ENCODE measurements at regions of chr4 and their contacts with region 1.

Region 1: GRCh38 chr4:15956179-15956850 is 6.7 kb downstream of the FGFBP2 start:
- DNase-seq: peak; percentile 80 to 81
- H3K4me3 ChIP-seq: no peak overlapping the region
- H3K4me3 Mint-ChIP-seq: no peak overlapping the region
- H3K27ac Mint-ChIP-seq: no peak overlapping the region
- H3K4me1 ChIP-seq: peaks cover 8% of the 10 kb centered on the region; the same call in 1 of the 2 replicates
- H3K4me1 Mint-ChIP-seq: peaks cover 5% of the 10 kb centered on the region
- H3K27me3 ChIP-seq: no peaks in the 10 kb centered on the region
- H3K27me3 Mint-ChIP-seq: no peaks in the 10 kb centered on the region
- CTCF ChIP-seq: peak; percentile 85 to 86

Region 2: DNA sequence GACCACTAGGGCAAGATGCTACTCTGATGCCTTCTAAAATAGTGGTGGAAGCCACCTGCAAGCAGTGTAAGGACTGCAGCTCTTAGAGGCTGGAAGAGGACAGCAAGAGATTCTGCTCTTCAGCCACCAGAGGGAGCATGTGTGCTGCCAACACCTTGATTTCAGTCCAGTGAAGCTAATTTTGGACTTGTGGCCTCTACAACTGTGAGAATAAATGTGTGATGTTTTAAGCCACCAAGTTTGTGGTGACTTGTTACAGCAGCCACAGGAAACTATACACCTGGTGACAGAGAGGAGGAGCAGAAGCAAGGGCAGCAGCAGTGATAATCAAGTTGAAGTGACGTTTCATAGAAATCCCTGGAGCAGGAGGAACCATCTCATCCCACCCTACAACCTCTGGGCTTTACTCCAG is 73.6 kb before region 1 on chr4:
- CTCF ChIA-PET with region 1: interaction called, 57 read pairs
- POLR2A ChIA-PET with region 1: no interaction called
- intact Hi-C with region 1: loop called (anchors 1 kb)
- DNase-seq: peak; percentile 53 to 71
- H3K4me3 ChIP-seq: no peak overlapping the region
- H3K4me3 Mint-ChIP-seq: no peak overlapping the region
- H3K27ac Mint-ChIP-seq: no peak overlapping the region
- H3K4me1 ChIP-seq: no peaks in the 10 kb centered on the region
- H3K4me1 Mint-ChIP-seq: no peaks in the 10 kb centered on the region
- H3K27me3 ChIP-seq: no peaks in the 10 kb centered on the region
- H3K27me3 Mint-ChIP-seq: peaks cover 2% of the 10 kb centered on the region
- CTCF ChIP-seq: peak; percentile 85 to 88

Region 3: GRCh38 chr4:16171831-16172230 is 215.5 kb after region 1 on chr4:
- CTCF ChIA-PET with region 1: no interaction called
- POLR2A ChIA-PET with region 1: no interaction called
- intact Hi-C with region 1: no loop called
- DNase-seq: no peak
- H3K4me3 ChIP-seq: no peak overlapping the region
- H3K4me3 Mint-ChIP-seq: no peak overlapping the region
- H3K27ac Mint-ChIP-seq: no peak overlapping the region
- H3K4me1 ChIP-seq: no peaks in the 10 kb centered on the region
- H3K4me1 Mint-ChIP-seq: no peaks in the 10 kb centered on the region
- H3K27me3 ChIP-seq: no peaks in the 10 kb centered on the region
- H3K27me3 Mint-ChIP-seq: no peaks in the 10 kb centered on the region
- CTCF ChIP-seq: no peak